Heart right ventricle (tissue), 16 donors: ENCODE measurements at regions of chr3 and their contacts with region 1.

Region 1: DNA sequence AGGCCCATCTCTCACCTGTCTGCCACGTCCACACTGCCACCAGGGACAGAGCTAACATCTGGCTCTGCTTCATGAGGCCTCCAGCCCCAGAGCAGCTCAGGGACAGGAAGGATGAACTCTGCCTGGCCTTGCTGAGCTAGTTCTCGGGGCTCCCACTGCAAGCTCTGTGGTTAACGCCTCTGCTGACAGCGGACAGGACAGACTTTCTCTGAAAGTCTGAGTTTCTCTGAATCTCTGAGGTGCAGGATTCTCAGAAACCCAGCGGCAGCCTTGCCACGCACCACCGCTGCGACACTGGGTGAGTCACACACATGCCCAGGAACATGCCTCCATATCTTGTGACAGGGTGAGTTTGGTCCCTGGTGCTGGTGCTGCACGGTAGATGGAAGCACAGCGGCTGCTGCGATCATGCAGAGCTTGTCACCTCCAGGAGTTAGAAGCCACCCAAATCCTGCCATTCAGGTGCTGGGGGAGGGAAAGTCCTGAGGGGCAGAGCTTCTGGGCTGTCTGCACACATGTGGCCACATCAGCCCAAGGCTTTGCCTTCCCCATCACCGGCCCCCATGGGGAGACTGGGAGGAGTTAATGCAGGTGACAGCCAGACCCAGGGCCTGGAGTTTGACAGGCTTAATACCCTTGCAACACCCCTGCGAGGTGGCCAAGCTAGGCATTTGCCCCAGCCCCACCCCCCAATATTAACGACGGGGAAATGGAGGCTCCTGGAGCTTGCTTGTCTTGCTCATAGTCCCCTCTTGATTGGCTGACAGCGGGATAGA is 267.0 kb downstream of the PLCL2 start:
- DNase-seq: no peak
- ATAC-seq: peak in 1 of 8 donors; percentile 16
- H3K4me3 ChIP-seq: no peak overlapping the region
- H3K27ac ChIP-seq: no peak overlapping the region
- H3K4me1 ChIP-seq: peaks cover 0 to 3% (median 0%) of the 10 kb centered on the region in 9 donors
- H3K27me3 ChIP-seq: no peaks in the 10 kb centered on the region
- CTCF ChIP-seq: no peak

Region 2: GRCh38 chr3:15694628-15695027 is 1457.2 kb before region 1 on chr3:
- intact Hi-C with region 1: loop called in 1 of 10 experiments (anchors 5 kb)
- DNase-seq: no peak
- ATAC-seq: no peak
- H3K4me3 ChIP-seq: no peak overlapping the region
- H3K27ac ChIP-seq: no peak overlapping the region
- H3K4me1 ChIP-seq: no peaks in the 10 kb centered on the region
- H3K27me3 ChIP-seq: no peaks in the 10 kb centered on the region
- CTCF ChIP-seq: no peak

Region 3: GRCh38 chr3:16795581-16795980 is 356.2 kb before region 1 on chr3:
- intact Hi-C with region 1: no loop called
- DNase-seq: no peak
- ATAC-seq: no peak
- H3K4me3 ChIP-seq: no peak overlapping the region
- H3K27ac ChIP-seq: no peak overlapping the region
- H3K4me1 ChIP-seq: peaks cover 0 to 22% (median under 1%) of the 10 kb centered on the region in 9 donors
- H3K27me3 ChIP-seq: no peaks in the 10 kb centered on the region
- CTCF ChIP-seq: no peak

Region 4: GRCh38 chr3:17044855-17045254 is 106.9 kb before region 1 on chr3:
- intact Hi-C with region 1: loop called in 1 of 10 experiments (anchors 10 kb)
- DNase-seq: no peak
- ATAC-seq: no peak
- H3K4me3 ChIP-seq: no peak overlapping the region
- H3K27ac ChIP-seq: no peak overlapping the region
- H3K4me1 ChIP-seq: peaks cover 0 to 32% (median 14%) of the 10 kb centered on the region in 9 donors
- H3K27me3 ChIP-seq: no peaks in the 10 kb centered on the region
- CTCF ChIP-seq: no peak

Region 5: GRCh38 chr3:17110660-17111396 is 41.0 kb before region 1 on chr3:
- intact Hi-C with region 1: no loop called
- DNase-seq: no peak
- ATAC-seq: no peak
- H3K4me3 ChIP-seq: no peak overlapping the region
- H3K27ac ChIP-seq: no peak overlapping the region
- H3K4me1 ChIP-seq: no peaks in the 10 kb centered on the region
- H3K27me3 ChIP-seq: no peaks in the 10 kb centered on the region
- CTCF ChIP-seq: no peak

Region 6: DNA sequence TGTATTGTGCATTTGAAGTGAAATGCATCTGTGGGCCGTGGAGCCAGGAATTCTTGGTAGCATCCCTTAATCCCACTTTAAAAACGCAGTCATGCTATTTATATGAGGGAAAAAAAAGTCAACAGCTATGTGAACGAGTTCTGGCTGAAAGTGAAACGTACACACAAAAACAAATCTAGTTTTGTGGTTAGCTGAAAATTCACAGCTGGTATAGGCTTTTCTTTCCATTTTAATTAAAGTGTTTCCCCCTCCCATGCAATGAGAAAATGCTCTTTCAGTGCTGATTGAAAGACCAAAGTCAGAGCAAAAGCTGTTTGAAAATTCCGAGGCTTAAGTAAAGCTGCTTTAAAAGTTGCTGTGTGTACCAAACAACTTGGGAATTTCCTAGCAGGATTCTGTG is 30.4 kb after region 1 on chr3:
- intact Hi-C with region 1: loop called in 1 of 10 experiments (anchors 1 kb)
- DNase-seq: no peak
- ATAC-seq: no peak
- H3K4me3 ChIP-seq: no peak overlapping the region
- H3K27ac ChIP-seq: peak overlapping the region in 1 of 10 donors; percentile 7
- H3K4me1 ChIP-seq: peaks cover 3 to 39% (median 20%) of the 10 kb centered on the region in 9 donors
- H3K27me3 ChIP-seq: no peaks in the 10 kb centered on the region
- CTCF ChIP-seq: no peak

Region 7: GRCh38 chr3:17301271-17301670 is 149.5 kb after region 1 on chr3:
- intact Hi-C with region 1: no loop called
- DNase-seq: no peak
- ATAC-seq: peak in 1 of 8 donors; percentile 65
- H3K4me3 ChIP-seq: no peak overlapping the region
- H3K27ac ChIP-seq: no peak overlapping the region
- H3K4me1 ChIP-seq: peaks cover 0 to 16% (median 6%) of the 10 kb centered on the region in 9 donors
- H3K27me3 ChIP-seq: no peaks in the 10 kb centered on the region
- CTCF ChIP-seq: no peak